Right ventricle myocardium inferior (tissue), 1 donor: ENCODE measurements at regions of chr5 and their contacts with region 1.

Region 1: GRCh38 chr5:171418316-171418981 is 998 bp upstream of the FGF18 start:
- DNase-seq: peak; percentile 85
- ATAC-seq: peak; percentile 85

Region 2: GRCh38 chr5:171580502-171581265 is 162.2 kb after region 1 on chr5:
- intact Hi-C with region 1: loop called (anchors 2 kb)
- DNase-seq: no peak
- ATAC-seq: peak; percentile 35

Region 3: GRCh38 chr5:171845857-171846256 is 427.4 kb after region 1 on chr5:
- intact Hi-C with region 1: loop called (anchors 1 kb)
- DNase-seq: no peak
- ATAC-seq: peak; percentile 49

Region 4: GRCh38 chr5:171907725-171908343 is 489.4 kb after region 1 on chr5:
- intact Hi-C with region 1: loop called (anchors 1 kb)
- DNase-seq: no peak
- ATAC-seq: peak; percentile 87